ENCODE measurements at regions of chr9 and their contacts with region 1.

Region 1: GRCh38 chr9:98010445-98010844 is 27.3 kb downstream of the ANP32B start:
- DNase-seq: no peak
- ATAC-seq: no peak
- H3K4me3 ChIP-seq: no peak overlapping the region
- H3K27ac ChIP-seq: no peak overlapping the region
- H3K4me1 ChIP-seq: no peaks in the 10 kb centered on the region
- H3K27me3 ChIP-seq: no peaks in the 10 kb centered on the region
- CTCF ChIP-seq: no peak

Region 2: DNA sequence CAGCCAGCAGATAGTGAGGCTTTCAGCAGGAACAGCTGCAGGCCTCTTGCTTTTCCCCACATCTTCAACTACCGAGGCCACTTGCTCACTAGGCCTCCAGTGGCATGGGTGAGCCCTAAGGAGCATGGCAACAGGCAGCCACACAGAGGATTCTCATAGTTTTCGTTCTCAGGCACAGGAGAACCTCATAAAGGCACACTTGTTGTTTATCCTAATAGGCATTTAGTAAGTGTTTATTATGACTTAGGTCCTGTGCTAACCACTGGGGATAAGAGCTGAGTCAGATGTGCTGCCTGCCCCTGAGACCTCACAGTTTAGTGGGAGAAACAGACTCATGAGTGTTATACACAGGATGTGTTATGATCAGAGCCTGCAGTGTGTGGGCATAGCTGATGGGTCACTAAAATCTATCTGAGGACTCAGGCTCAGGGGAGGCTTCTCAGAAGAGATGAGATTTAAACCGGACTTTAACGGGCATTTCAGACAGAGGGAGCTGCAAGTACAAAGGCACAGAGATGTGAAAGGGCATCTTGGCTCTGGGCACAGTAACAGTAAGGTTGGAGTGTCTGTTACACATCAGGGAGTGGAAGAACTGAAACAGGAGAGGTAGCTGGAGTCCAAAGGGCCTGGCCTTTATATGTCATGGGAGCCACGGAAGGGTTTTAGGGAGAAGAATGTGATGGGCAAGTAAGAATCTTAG is 51.5 kb before region 1 on chr9:
- CTCF ChIA-PET with region 1: no interaction called
- POLR2A ChIA-PET with region 1: no interaction called
- in situ Hi-C with region 1: no loop called
- intact Hi-C with region 1: no loop called
- DNase-seq: no peak
- ATAC-seq: no peak
- H3K4me3 ChIP-seq: no peak overlapping the region
- H3K27ac ChIP-seq: no peak overlapping the region
- H3K4me1 ChIP-seq: no peaks in the 10 kb centered on the region
- H3K27me3 ChIP-seq: no peaks in the 10 kb centered on the region
- CTCF ChIP-seq: no peak

Region 3: DNA sequence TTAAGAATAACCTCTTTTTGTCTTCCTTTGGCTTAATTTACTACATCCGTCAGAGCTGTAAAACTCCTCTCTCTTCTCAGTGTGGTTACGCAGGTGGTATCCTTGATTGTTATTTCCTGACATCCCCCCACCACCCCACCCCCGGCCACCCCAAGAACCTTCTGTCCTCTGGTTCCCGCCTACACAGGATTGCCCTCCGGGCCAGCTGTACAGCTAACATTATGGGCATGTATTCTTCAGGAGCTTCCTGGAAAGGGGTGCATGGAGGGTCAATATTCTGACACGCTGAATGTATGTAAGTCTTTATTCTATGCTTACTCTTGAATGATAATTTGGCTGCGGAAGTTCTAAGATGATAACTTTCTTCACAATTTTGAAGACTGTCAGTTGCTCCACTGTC is 40.3 kb before region 1 on chr9:
- CTCF ChIA-PET with region 1: no interaction called
- POLR2A ChIA-PET with region 1: interaction called, 16 read pairs
- in situ Hi-C with region 1: no loop called
- intact Hi-C with region 1: no loop called
- DNase-seq: no peak
- ATAC-seq: no peak
- H3K4me3 ChIP-seq: no peak overlapping the region
- H3K27ac ChIP-seq: no peak overlapping the region
- H3K4me1 ChIP-seq: no peaks in the 10 kb centered on the region
- H3K27me3 ChIP-seq: no peaks in the 10 kb centered on the region
- CTCF ChIP-seq: no peak

Measured in Panc1 (cell line).